OCI-LY7 (cell line): ENCODE measurements at regions of chr16 and their contacts with region 1.

Region 1: GRCh38 chr16:20799599-20799998 is 6.7 kb downstream of the ERI2 start:
- DNase-seq: peak; percentile 58
- H3K4me3 ChIP-seq: no peak overlapping the region
- H3K27ac ChIP-seq: no peak overlapping the region
- H3K4me1 ChIP-seq: no peaks in the 10 kb centered on the region
- CTCF ChIP-seq: peak; percentile 85

Region 2: DNA sequence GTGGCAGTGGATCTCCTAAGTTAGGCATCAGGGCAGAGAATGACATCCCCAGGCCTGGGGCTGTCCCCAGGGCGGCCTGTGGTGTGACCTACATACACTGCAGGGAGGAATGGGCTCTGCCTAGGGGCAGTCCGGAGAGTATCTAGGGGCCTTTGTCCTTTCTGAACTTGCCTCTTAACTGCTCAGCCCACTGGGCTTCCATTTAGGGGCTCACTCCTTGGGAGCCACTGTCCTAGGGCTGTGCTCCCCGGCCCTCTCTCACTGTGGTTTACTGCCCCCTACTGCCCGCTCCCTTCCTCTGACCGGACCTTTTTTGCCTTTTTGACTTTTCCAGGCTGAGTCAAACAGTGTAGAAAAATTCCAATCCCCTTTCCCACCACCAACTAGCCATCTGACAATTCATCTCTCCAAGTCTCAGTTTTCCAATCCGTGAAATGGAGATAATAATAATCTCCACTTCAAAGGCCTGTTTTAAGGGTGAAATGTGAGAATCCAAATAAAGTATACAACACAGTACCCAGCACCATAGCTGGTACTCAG is 284.2 kb after region 1 on chr16:
- CTCF ChIA-PET with region 1: no interaction called
- POLR2A ChIA-PET with region 1: no interaction called
- intact Hi-C with region 1: loop called (anchors 2 kb)
- DNase-seq: peak; percentile 51
- H3K4me3 ChIP-seq: no peak overlapping the region
- H3K27ac ChIP-seq: no peak overlapping the region
- H3K4me1 ChIP-seq: no peaks in the 10 kb centered on the region
- CTCF ChIP-seq: peak; percentile 86